Activated CD4-positive, alpha-beta T cell treated with anti-CD3 and anti-CD28 coated beads for 36 hours (primary cell): ENCODE measurements at regions of chr1 and their contacts with region 1.

Region 1: GRCh38 chr1:28259307-28260167 is at the start of gene SESN2:
- DNase-seq: peak; percentile 100
- ATAC-seq: peak; percentile 93
- H3K4me3 Mint-ChIP-seq: peak within 1 kb of the TSS; percentile 81
- H3K27ac Mint-ChIP-seq: peak within 1 kb of the TSS; percentile 99
- H3K4me1 Mint-ChIP-seq: peaks cover 42% of the 10 kb centered on the region
- H3K27me3 Mint-ChIP-seq: no peaks in the 10 kb centered on the region
- total RNA-seq, gene SESN2: 32.9 to 33.3 TPM

Region 2: GRCh38 chr1:28028873-28029654 is 230.5 kb before region 1 on chr1:
- CTCF ChIA-PET with region 1: no interaction called
- POLR2A ChIA-PET with region 1: no interaction called
- intact Hi-C with region 1: no loop called
- DNase-seq: no peak
- ATAC-seq: no peak
- H3K4me3 Mint-ChIP-seq: no peak overlapping the region
- H3K27ac Mint-ChIP-seq: no peak overlapping the region
- H3K4me1 Mint-ChIP-seq: no peaks in the 10 kb centered on the region
- H3K27me3 Mint-ChIP-seq: no peaks in the 10 kb centered on the region

Region 3: DNA sequence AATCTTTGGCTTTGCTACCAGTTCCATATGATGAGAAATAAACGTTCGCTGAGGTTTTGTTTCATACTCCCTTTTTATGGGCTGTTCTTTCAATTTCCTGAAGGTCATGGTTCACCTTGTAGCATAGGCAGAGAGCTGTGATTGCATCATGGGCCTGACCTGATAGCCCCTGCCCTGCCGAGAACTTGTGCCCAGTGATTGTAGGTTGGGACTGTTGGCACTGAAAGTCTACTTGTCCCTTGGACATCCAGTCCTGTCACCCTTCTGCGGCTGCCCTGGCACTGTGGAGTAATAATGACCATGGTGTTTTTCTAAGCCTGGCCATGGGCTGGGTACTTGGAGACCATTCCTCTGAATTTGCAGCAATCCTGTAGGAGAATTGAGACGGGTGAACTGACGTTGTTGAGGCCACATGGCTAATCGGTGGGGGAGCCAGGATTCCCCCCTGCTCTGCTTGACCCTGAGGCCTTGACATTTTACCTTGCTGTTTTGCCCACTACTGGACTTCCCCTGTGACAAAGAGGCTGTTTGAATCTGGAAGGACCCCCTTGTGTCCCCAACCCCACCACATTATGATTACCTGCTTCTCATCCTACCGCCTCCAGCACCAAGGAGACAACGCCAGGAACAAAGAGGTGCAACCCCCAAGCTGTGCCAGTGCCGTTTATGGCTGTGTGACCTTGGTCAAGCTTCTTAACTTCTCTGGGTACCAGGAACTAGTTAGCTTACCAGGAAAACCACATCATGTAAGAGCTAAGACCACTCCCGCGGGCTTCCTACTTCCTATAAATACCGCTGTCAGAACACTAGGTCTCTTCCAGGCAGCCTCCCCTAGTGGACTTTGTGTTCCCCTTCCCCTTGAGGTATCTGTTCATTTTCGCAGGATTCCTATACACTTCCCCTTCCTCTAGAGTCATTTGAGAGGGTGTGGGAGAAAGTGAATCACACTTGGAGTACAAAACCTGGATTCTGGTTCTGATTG is 23.2 kb after region 1 on chr1:
- CTCF ChIA-PET with region 1: no interaction called
- POLR2A ChIA-PET with region 1: no interaction called
- intact Hi-C with region 1: no loop called
- DNase-seq: no peak
- ATAC-seq: no peak
- H3K4me3 Mint-ChIP-seq: no peak overlapping the region
- H3K27ac Mint-ChIP-seq: no peak overlapping the region
- H3K4me1 Mint-ChIP-seq: no peaks in the 10 kb centered on the region
- H3K27me3 Mint-ChIP-seq: no peaks in the 10 kb centered on the region

Region 4: GRCh38 chr1:28369371-28370238 is 110.1 kb after region 1 on chr1 and contains the start of gene PHACTR4:
- CTCF ChIA-PET with region 1: no interaction called
- POLR2A ChIA-PET with region 1: interaction called, 3 read pairs
- intact Hi-C with region 1: loop called in 1 of 2 experiments (anchors 1 kb)
- DNase-seq: peak; percentile 90
- ATAC-seq: peak; percentile 93
- H3K4me3 Mint-ChIP-seq: peak within 1 kb of the TSS; percentile 92
- H3K27ac Mint-ChIP-seq: peak within 1 kb of the TSS; percentile 92
- H3K4me1 Mint-ChIP-seq: peaks cover 25% of the 10 kb centered on the region
- H3K27me3 Mint-ChIP-seq: no peaks in the 10 kb centered on the region
- total RNA-seq, gene PHACTR4: 23.0 to 30.1 TPM

Region 5: DNA sequence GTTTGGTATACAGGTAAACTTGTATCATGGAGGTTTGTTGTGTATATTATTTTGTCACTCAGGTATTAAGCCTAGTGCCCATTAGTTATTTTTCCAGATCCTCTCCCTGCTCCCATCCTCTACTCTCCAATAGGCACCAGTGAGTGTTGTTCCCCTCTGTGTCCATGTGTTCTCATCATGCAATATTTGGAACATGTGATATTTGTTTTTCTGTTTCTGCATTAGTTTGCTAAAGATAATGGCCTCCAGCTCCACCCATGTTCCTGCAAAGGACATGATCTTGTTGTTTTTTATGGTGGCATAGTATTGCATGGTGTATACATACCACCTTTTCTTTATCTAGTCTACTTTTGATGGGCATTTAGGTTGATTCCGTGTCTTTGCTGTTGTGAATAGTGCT is 120.9 kb after region 1 on chr1:
- CTCF ChIA-PET with region 1: no interaction called
- POLR2A ChIA-PET with region 1: no interaction called
- intact Hi-C with region 1: no loop called
- DNase-seq: no peak
- ATAC-seq: no peak
- H3K4me3 Mint-ChIP-seq: no peak overlapping the region
- H3K27ac Mint-ChIP-seq: no peak overlapping the region
- H3K4me1 Mint-ChIP-seq: peaks cover 25% of the 10 kb centered on the region
- H3K27me3 Mint-ChIP-seq: no peaks in the 10 kb centered on the region

Region 6: GRCh38 chr1:28552758-28553663 is 293.5 kb after region 1 on chr1 and contains the start of gene TRNAU1AP:
- CTCF ChIA-PET with region 1: no interaction called
- POLR2A ChIA-PET with region 1: no interaction called
- intact Hi-C with region 1: loop called in 1 of 2 experiments (anchors 1 kb)
- DNase-seq: peak; percentile 99
- ATAC-seq: peak; percentile 94
- H3K4me3 Mint-ChIP-seq: peak within 1 kb of the TSS; percentile 92
- H3K27ac Mint-ChIP-seq: peak within 1 kb of the TSS; percentile 95
- H3K4me1 Mint-ChIP-seq: peaks cover 24% of the 10 kb centered on the region
- H3K27me3 Mint-ChIP-seq: no peaks in the 10 kb centered on the region
- total RNA-seq, gene TRNAU1AP: 50.7 to 60.2 TPM

Region 7: GRCh38 chr1:28668191-28668955 is 408.8 kb after region 1 on chr1 and contains the start of gene GMEB1:
- CTCF ChIA-PET with region 1: no interaction called
- POLR2A ChIA-PET with region 1: no interaction called
- intact Hi-C with region 1: loop called in 1 of 2 experiments (anchors 1 kb)
- DNase-seq: peak; percentile 93
- ATAC-seq: peak; percentile 72
- H3K4me3 Mint-ChIP-seq: peak within 1 kb of the TSS; percentile 84
- H3K27ac Mint-ChIP-seq: peak within 1 kb of the TSS; percentile 99
- H3K4me1 Mint-ChIP-seq: peaks cover 11% of the 10 kb centered on the region
- H3K27me3 Mint-ChIP-seq: no peaks in the 10 kb centered on the region
- total RNA-seq, gene GMEB1: 20.3 to 25.4 TPM